Activated T-helper 1 cell treated with anti-CD3 and anti-CD28 coated beads, Interleukin-12 subunit alpha, Interleukin-12 subunit beta, Interleukin-2, Interleukin-4 antibody, amounts not matched to agents 30 ng/mL and 10 ng/mL and 1 ng/mL, durations not matched to agents 14 hours and 24 hours and 36 hours (primary cell): ENCODE measurements at regions of chr1 and their contacts with region 1.

Region 1: DNA sequence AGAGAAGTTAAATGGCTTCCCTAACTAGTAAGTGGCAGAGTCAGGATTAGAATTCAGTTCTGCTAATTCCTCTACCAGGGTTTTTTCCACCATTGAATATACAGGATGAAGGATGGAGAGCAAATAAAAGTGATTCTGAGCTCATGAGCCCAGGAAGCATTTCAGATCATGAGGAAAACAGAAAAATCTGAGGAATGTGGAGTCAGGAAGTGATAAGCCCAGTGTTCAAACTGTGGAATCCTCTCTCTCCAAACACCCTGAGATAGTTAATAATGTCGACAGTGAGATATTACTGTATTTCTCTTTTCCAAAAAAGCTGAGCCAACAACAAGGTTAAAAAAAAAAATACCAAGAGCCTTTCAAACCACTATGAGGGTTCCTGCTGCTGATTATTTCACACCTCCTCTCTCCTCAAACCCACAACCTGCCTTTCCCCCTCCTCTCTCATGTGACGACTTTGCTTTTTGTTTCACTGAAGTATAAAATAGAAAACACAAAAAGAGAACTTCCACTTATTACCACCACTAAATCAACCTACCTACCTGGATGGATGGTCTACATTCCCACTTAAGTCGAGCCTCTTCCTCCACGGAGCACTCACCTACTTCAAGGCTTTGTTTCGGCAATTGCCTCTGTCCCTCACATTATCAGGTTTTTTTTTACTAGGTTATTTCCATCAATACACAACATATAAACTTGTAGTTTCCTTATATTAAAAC is 8.9 kb downstream of the SLAMF1 start:
- DNase-seq: peak; percentile 64
- H3K4me3 Mint-ChIP-seq: peak overlapping the region; percentile 66
- H3K27ac Mint-ChIP-seq: peak overlapping the region; percentile 97
- H3K4me1 Mint-ChIP-seq: peaks cover 93% of the 10 kb centered on the region
- H3K27me3 Mint-ChIP-seq: no peaks in the 10 kb centered on the region

Region 2: DNA sequence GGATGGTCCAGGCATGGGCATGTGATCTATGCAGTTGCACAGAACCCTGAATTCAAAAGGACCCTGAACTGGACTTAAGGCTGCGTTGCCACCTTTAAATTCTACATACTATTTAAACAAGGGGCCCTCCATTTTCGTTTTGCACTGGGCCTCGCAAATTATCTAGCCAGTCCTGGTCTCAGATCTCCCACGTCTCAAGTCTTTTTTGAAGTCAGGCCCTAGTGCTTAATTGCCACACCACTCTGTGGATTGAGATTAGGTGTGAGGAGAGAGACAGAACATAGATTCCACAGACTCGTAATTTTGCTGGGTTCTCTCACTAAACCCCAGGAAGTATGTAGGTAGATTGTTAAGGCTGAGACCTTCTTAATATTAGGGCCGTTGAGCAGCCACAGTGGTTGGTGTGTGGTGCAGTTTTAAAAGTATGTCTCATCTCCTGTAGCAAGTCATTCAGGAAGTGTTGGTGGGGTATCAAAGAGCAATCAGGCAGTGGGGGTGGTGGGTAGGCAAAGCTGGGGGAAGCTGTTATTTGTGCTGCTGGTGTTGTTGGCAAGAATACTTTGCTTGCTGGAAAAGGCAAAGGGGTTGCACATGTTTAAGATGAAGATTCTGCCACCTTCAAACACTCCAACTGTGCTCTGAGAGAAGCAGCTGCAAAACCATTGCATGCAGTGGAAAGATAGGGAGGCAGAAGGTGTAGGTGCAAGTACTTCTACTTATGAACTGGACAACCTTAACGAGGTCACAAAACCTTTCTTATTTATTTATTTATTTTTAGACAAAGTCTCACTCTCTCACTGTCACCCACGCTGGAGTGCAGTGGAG is 69.9 kb before region 1 on chr1:
- intact Hi-C with region 1: loop called (anchors 1 kb)
- DNase-seq: peak; percentile 50
- H3K4me3 Mint-ChIP-seq: peak overlapping the region; percentile 60
- H3K27ac Mint-ChIP-seq: peak overlapping the region; percentile 95
- H3K4me1 Mint-ChIP-seq: peaks cover 83% of the 10 kb centered on the region
- H3K27me3 Mint-ChIP-seq: no peaks in the 10 kb centered on the region

Region 3: DNA sequence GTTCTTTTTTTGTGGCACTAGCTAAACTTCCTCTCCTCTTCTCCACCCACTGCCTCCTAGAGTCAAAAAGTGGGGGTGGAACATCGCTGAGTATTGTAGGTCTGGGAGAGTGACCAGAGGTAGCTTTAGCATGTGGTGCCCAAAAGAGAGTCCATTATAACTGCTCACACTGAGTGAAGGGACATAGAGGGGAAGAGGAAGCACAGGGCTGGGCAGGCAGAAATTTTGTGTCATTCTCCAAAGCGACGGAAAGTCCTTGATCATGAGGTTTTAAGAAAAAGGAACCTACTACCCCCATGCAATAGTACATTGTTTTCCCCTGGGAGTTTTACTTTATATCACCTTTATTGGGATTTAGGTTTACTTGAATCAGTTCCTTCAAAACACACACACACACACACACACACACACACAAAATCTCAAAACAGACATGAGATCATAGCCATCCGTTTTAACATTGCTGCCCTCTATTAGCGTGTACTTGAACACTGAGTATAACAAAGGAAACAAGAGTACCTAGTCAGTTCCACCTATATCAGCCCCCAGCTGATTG is 62.8 kb before region 1 on chr1:
- intact Hi-C with region 1: loop called (anchors 2 kb)
- DNase-seq: no peak
- H3K4me3 Mint-ChIP-seq: peak overlapping the region; percentile 79
- H3K27ac Mint-ChIP-seq: peak overlapping the region; percentile 84
- H3K4me1 Mint-ChIP-seq: peaks cover 96% of the 10 kb centered on the region
- H3K27me3 Mint-ChIP-seq: no peaks in the 10 kb centered on the region

Region 4: GRCh38 chr1:160618763-160619274 is 19.2 kb before region 1 on chr1:
- intact Hi-C with region 1: loop called (anchors 1 kb)
- DNase-seq: no peak
- H3K4me3 Mint-ChIP-seq: peak overlapping the region; percentile 24
- H3K27ac Mint-ChIP-seq: peak overlapping the region; percentile 51
- H3K4me1 Mint-ChIP-seq: peaks cover 76% of the 10 kb centered on the region
- H3K27me3 Mint-ChIP-seq: no peaks in the 10 kb centered on the region

Region 5: DNA sequence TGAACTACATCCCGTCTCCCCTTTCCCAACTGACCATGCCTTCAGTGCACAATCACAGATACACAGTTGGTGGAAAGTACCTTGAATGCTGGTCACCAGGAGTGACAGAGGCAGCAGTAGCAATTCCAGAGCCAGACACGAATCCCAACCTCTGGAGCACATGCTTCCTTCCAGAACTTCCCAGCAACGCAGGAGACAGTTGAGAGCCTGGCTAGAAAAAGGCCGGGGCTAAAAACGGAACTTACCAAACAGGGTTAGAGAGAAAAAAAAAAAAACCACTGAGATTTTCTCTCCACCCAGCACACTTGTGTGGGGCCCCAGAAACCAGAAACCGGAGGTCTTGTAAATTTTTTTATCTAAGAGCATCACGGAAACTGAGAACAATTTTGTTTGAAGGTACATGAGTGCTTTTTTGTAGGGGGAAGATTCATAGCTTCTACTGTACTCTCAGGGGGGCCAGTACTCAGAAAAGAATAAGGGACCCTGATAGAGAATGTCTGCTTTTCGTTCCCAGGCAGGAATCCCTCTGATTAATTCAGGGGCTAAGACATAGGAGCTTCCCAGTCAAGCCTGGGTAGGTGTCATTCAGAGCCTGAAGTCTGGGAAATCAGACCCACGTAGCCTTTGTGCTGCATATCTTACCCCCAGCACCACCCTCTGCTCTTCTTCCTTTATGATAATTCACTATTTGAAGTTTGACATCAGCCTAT is 73.8 kb after region 1 on chr1 and contains the start of gene CD48:
- intact Hi-C with region 1: loop called (anchors 1 kb)
- DNase-seq: peak; percentile 41
- H3K4me3 Mint-ChIP-seq: no peak within 1 kb of the TSS
- H3K27ac Mint-ChIP-seq: no peak within 1 kb of the TSS
- H3K4me1 Mint-ChIP-seq: peaks cover 26% of the 10 kb centered on the region
- H3K27me3 Mint-ChIP-seq: no peaks in the 10 kb centered on the region
- total RNA-seq, gene CD48: 219 and 222 TPM in 2 replicates

Region 6: DNA sequence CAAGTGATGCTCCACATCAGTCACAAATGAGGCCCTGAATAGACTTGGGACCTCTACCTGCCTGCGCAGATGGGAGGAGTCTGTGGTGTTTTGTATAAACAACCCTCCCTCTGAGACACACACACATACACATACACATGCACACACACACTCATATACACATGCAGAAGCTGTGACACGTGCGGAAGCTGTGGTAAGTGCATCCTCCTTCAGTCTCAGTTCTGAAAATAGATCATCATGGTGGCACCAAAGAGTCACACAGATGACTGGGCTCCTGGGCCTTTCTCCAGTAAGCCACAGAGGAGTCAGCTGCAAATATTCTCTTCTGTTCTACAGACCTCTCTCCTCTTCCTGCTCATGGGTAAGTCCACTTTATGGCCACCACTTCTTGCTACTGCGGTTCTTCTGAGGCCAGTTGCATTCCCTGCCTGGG is 158.0 kb after region 1 on chr1 and contains the start of gene LY9:
- intact Hi-C with region 1: loop called (anchors 1 kb)
- DNase-seq: peak; percentile 76
- H3K4me3 Mint-ChIP-seq: peak within 1 kb of the TSS; percentile 73
- H3K27ac Mint-ChIP-seq: peak within 1 kb of the TSS; percentile 77
- H3K4me1 Mint-ChIP-seq: peaks cover 67% of the 10 kb centered on the region
- H3K27me3 Mint-ChIP-seq: peaks cover 14% of the 10 kb centered on the region
- total RNA-seq, gene LY9: 0.49 and 0.71 TPM in 2 replicates

Region 7: GRCh38 chr1:161159087-161159912 is 521.3 kb after region 1 on chr1 and contains the start of gene USP21:
- intact Hi-C with region 1: no loop called
- DNase-seq: peak; percentile 91
- H3K4me3 Mint-ChIP-seq: peak within 1 kb of the TSS; percentile 88
- H3K27ac Mint-ChIP-seq: peak within 1 kb of the TSS; percentile 86
- H3K4me1 Mint-ChIP-seq: peaks cover 64% of the 10 kb centered on the region
- H3K27me3 Mint-ChIP-seq: no peaks in the 10 kb centered on the region
- total RNA-seq, gene USP21: 32.9 and 38.2 TPM in 2 replicates